Left cardiac atrium (tissue), 4 donors: ENCODE measurements at regions of chr14 and their contacts with region 1.

Region 1: GRCh38 chr14:64340560-64341196 is 46.5 kb upstream of the ESR2 start:
- DNase-seq: no peak
- ATAC-seq: no peak

Region 2: GRCh38 chr14:64465191-64465822 is 124.6 kb after region 1 on chr14 and contains the start of gene AKAP5:
- intact Hi-C with region 1: loop called in 1 of 2 experiments (anchors 10 kb)
- DNase-seq: peak; percentile 49
- ATAC-seq: peak; percentile 94 to 97
- total RNA-seq, gene AKAP5: 0.26 to 0.27 TPM

Region 3: DNA sequence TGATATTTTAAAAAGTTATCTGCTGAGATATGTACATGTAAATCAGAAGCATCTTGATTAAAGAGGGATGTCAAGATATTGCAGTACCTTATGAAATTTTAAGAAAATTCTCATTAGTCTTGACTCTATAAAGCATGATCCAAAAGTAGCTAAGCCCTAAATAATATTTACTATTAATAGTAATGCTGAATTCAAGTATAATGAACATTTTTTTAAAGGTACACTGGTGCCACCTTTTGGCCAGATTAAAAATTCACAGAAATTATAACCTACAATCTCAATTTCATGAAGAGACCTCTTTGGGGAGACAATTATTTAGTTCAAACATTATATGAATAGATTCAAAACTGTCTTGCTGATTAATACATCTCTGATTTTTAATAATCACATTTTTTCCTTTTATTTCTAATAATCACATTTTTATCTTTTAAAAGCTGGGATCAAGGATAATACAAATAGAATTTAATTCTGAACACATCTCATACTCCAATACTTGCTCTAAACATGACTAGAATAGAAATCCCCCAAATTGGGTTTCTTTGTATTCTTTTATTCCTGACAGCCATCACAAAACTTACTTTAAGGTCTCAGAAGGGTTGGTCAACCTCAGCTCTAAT is 138.1 kb after region 1 on chr14:
- intact Hi-C with region 1: loop called in 1 of 2 experiments (anchors 5 kb)
- DNase-seq: no peak
- ATAC-seq: no peak

Region 4: DNA sequence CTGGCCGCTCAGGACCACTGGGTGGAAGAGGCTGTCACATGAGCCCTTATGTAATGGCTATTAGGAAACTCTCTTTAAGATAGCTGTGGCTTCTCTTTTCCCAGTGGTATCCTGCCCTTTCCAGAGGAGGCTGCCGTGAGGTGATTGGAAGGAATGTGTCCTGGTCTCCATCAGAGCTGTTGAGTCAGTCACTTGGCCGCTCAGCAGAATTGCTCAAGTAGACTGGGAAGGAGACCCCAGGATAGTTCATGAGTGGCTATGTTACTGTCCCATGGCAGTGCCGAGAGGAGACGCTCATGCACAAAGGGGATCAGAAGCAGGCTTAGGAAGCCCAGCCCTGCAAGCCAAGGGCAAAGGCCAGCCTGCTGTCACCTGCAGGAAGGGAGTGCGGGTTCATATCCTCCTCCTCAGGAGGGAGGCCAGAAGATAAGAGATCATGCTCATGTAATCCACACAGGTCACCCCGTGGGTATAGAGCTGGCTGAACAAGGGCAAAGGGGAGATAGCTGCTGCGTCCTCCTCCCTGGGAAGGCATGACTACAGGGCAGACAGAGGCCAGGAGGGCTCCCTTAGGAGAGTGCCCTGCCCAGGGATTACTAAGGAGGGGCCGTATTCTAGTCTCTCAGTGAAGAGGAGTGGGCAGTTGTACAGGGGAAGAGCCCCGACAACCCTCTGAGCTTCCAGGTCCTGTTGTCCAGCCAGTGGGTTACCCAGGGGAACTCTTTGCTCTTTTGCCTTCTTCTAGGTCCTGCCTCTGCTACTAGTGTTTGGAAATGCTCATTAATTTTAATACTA is 898.7 kb after region 1 on chr14:
- intact Hi-C with region 1: no loop called
- DNase-seq: no peak
- ATAC-seq: peak; percentile 18 to 77